ENCODE measurements at regions of chr11 and their contacts with region 1.

Region 1: GRCh38 chr11:65477149-65477965 is 21.5 kb upstream of the MALAT1 start:
- DNase-seq: peak; percentile 98
- ATAC-seq: peak; percentile 89 to 93

Region 2: GRCh38 chr11:65491614-65492386 is 14.4 kb after region 1 on chr11:
- intact Hi-C with region 1: loop called in 1 of 2 experiments (anchors 2 kb)
- DNase-seq: peak; percentile 89
- ATAC-seq: peak; percentile 1 to 33

Region 3: GRCh38 chr11:65497141-65498041 is 20.0 kb after region 1 on chr11:
- intact Hi-C with region 1: loop called in 1 of 2 experiments (anchors 1 kb)
- DNase-seq: peak; percentile 99
- ATAC-seq: peak; percentile 86 to 87

Measured in left cardiac atrium (tissue), 4 donors.